ENCODE measurements at regions of chr2 and their contacts with region 1.

Region 1: GRCh38 chr2:223644126-223644525 is 42.0 kb upstream of the SCG2 start:
- H3K4me3 Mint-ChIP-seq: no peak overlapping the region
- H3K27ac Mint-ChIP-seq: no peak overlapping the region
- H3K4me1 Mint-ChIP-seq: no peaks in the 10 kb centered on the region
- H3K27me3 Mint-ChIP-seq: peaks cover 2% of the 10 kb centered on the region

Region 2: GRCh38 chr2:223585666-223586065 is 58.5 kb before region 1 on chr2:
- intact Hi-C with region 1: loop called (anchors 2 kb)
- H3K4me3 Mint-ChIP-seq: no peak overlapping the region
- H3K27ac Mint-ChIP-seq: no peak overlapping the region
- H3K4me1 Mint-ChIP-seq: no peaks in the 10 kb centered on the region
- H3K27me3 Mint-ChIP-seq: no peaks in the 10 kb centered on the region

Measured in dendritic cell treated with granulocyte-macrophage colony-stimulating factor and Interleukin-4, amounts not matched to agents 40 ng/mL and 50 ng/mL, for 4 days (primary cell).